ENCODE measurements at regions of chr11 and their contacts with region 1.

Region 1: GRCh38 chr11:94767761-94768601 is at the start of gene AMOTL1:
- DNase-seq: peak; percentile 96
- H3K4me3 ChIP-seq: peak within 1 kb of the TSS; percentile 84 to 95 (median 91)
- H3K27ac ChIP-seq: peak within 1 kb of the TSS; percentile 97 to 99 (median 98)
- H3K4me1 ChIP-seq: peaks cover 0 to 77% (median 59%) of the 10 kb centered on the region in 4 donors
- H3K27me3 ChIP-seq: no peaks in the 10 kb centered on the region
- CTCF ChIP-seq: no peak
- EP300 ChIP-seq: peak in 2 of 4 donors; percentile 7 to 61
- POLR2A ChIP-seq: peak in 1 of 2 donors; percentile 74
- total RNA-seq, gene AMOTL1: 96.3 to 161 (median 115) TPM

Region 2: GRCh38 chr11:94543695-94544645 is 224.0 kb before region 1 on chr11 and contains the start of gene FUT4:
- intact Hi-C with region 1: loop called (anchors 10 kb)
- DNase-seq: peak; percentile 93
- H3K4me3 ChIP-seq: peak within 1 kb of the TSS; percentile 66 to 79 (median 72)
- H3K27ac ChIP-seq: peak within 1 kb of the TSS; percentile 92 to 98 (median 97)
- H3K4me1 ChIP-seq: peaks cover 0 to 53% (median 44%) of the 10 kb centered on the region in 4 donors
- H3K27me3 ChIP-seq: no peaks in the 10 kb centered on the region
- CTCF ChIP-seq: no peak
- EP300 ChIP-seq: no peak
- POLR2A ChIP-seq: peak; percentile 48 to 49
- total RNA-seq, gene FUT4: 5.6 to 8.4 (median 7.4) TPM

Region 3: GRCh38 chr11:94814272-94814976 is 46.4 kb after region 1 on chr11:
- intact Hi-C with region 1: loop called (anchors 5 kb)
- DNase-seq: peak; percentile 82
- H3K4me3 ChIP-seq: no peak overlapping the region
- H3K27ac ChIP-seq: peak overlapping the region; percentile 56 to 83 (median 77)
- H3K4me1 ChIP-seq: peaks cover 0 to 89% (median 59%) of the 10 kb centered on the region in 4 donors
- H3K27me3 ChIP-seq: no peaks in the 10 kb centered on the region
- CTCF ChIP-seq: no peak
- EP300 ChIP-seq: peak; percentile 15 to 69 (median 33)
- POLR2A ChIP-seq: no peak

Region 4: DNA sequence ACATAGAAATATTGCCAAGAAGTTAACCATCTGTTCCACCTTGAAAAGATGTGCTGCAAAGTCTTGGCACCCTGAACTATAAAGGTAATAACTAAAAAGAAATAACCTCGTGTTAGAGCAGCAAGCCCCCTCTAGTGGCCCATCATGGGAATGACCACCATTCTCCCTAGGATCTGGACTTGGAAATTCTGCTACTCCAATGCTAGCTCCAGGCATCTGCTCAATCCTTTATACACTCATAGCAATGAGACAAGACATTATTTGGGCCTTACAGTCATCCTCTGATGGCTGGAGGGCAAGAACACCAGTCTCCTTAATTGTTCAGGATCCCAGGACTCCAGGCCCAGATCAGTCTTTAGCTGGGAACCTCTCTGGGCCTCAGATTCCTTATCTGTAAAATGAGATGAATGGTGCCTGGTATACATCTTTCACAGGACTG is 129.4 kb after region 1 on chr11:
- intact Hi-C with region 1: no loop called
- DNase-seq: peak; percentile 76
- H3K4me3 ChIP-seq: no peak overlapping the region
- H3K27ac ChIP-seq: no peak overlapping the region
- H3K4me1 ChIP-seq: peaks cover 0 to 9% (median 0%) of the 10 kb centered on the region in 4 donors
- H3K27me3 ChIP-seq: no peaks in the 10 kb centered on the region
- CTCF ChIP-seq: peak; percentile 29 to 86 (median 76)
- EP300 ChIP-seq: no peak
- POLR2A ChIP-seq: no peak